ENCODE measurements at regions of chr1 and their contacts with region 1.

Region 1: DNA sequence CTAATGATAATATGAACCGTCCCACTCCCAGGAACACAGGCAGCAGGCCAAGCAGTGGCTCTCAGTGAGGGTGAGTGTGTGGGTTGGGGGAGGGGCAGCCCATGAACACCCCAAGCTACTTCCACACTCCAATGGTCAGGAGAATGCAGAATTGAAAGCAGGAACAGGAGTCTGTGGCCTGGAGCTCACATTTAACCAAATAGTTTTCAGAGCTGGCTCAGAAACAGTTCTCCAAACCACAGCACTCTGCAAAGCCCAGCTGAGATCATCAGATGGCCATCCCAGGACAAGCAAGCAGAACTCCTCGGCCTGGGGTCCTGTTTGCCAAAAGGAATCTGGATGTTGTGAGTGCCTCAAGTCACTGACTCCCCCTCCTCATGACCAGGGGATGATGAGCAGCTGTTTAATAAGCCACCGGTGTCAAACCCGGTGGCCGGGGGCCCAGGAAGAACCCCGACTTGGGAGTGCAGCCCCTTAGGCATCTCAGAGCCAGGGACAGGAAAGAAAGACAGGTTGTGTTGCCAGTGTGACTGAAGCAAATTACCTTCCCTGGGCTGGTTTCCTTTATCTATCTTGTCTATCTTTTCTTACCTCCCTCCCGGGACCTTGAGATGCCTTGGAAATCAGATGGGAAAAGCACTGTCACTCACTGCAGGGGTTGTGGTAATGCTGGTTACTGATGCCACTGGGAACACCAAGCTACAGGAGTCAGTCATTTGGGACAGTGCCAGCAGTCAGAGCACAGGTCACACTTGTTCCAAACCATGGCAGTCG is 20.4 kb downstream of the DEGS1 start:
- DNase-seq: peak in 1 of 2 experiments; percentile 75
- H3K4me3 ChIP-seq: 0 out of 8 replicates have a peak overlapping the region, but pooled peaks of 1 of the 4 experiments have one; percentile 14
- H3K27ac ChIP-seq: peak overlapping the region; percentile 46; the same call in 1 of the 2 replicates
- H3K4me1 ChIP-seq: peaks cover 1 to 12% (median 10%) of the 10 kb centered on the region in 4 experiments
- H3K27me3 ChIP-seq: no peaks in the 10 kb centered on the region
- CTCF ChIP-seq: no peak
- EP300 ChIP-seq: no peak
- POLR2A ChIP-seq: no peak
- RAD21 ChIP-seq: no peak

Region 2: GRCh38 chr1:224213438-224214112 is 10.1 kb after region 1 on chr1:
- CTCF ChIA-PET with region 1: interaction called, 3 read pairs
- POLR2A ChIA-PET with region 1: interaction called, 22 read pairs
- DNase-seq: peak; percentile 44 to 59
- H3K4me3 ChIP-seq: no peak overlapping the region; a peak in 1 of 8 replicates
- H3K27ac ChIP-seq: peak overlapping the region; percentile 6; the same call in 1 of the 2 replicates
- H3K4me1 ChIP-seq: peaks cover 7 to 15% (median 11%) of the 10 kb centered on the region in 4 experiments
- H3K27me3 ChIP-seq: no peaks in the 10 kb centered on the region; a peak in 1 of 7 replicates
- CTCF ChIP-seq: no peak
- EP300 ChIP-seq: no peak
- POLR2A ChIP-seq: peak; percentile 26 to 62
- RAD21 ChIP-seq: no peak

Region 3: DNA sequence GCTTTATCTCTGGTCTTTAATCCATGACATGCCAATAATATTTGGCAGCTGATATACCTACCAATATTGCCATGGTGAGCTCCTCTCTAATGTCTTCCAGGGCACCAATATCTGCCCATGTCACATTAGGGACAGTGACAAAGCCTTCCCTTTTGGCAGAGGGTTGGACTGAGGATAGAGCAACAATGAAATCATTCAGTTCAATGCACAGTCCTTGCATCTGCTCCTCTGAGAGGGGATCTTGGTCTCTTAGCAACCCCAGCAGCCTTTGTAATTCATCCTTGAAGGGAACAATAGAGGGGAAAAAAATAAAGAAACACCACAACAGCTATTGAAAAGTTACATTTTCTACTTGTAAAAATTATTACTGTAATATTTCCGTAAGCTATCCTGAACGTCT is 84.3 kb after region 1 on chr1:
- CTCF ChIA-PET with region 1: no interaction called
- POLR2A ChIA-PET with region 1: no interaction called
- DNase-seq: no peak
- H3K4me3 ChIP-seq: no peak overlapping the region
- H3K27ac ChIP-seq: peak overlapping the region; percentile 64; the same call in 1 of the 2 replicates
- H3K4me1 ChIP-seq: peaks cover 0 to 4% (median 3%) of the 10 kb centered on the region in 4 experiments; a peak in 5 of 7 replicates
- H3K27me3 ChIP-seq: no peaks in the 10 kb centered on the region
- CTCF ChIP-seq: no peak
- EP300 ChIP-seq: no peak
- POLR2A ChIP-seq: no peak
- RAD21 ChIP-seq: no peak

Measured in H1 (cell line).